A549 (cell line): ENCODE measurements at regions of chr16 and their contacts with region 1.

Region 1: GRCh38 chr16:66534376-66534799 is 15.5 kb downstream of the TK2 start:
- DNase-seq: no peak
- ATAC-seq: no peak
- H3K4me3 ChIP-seq: no peak overlapping the region
- H3K27ac ChIP-seq: no peak overlapping the region
- H3K4me1 ChIP-seq: no peaks in the 10 kb centered on the region
- CTCF ChIP-seq: no peak
- EP300 ChIP-seq: no peak
- POLR2A ChIP-seq: no peak
- RAD21 ChIP-seq: no peak

Region 2: DNA sequence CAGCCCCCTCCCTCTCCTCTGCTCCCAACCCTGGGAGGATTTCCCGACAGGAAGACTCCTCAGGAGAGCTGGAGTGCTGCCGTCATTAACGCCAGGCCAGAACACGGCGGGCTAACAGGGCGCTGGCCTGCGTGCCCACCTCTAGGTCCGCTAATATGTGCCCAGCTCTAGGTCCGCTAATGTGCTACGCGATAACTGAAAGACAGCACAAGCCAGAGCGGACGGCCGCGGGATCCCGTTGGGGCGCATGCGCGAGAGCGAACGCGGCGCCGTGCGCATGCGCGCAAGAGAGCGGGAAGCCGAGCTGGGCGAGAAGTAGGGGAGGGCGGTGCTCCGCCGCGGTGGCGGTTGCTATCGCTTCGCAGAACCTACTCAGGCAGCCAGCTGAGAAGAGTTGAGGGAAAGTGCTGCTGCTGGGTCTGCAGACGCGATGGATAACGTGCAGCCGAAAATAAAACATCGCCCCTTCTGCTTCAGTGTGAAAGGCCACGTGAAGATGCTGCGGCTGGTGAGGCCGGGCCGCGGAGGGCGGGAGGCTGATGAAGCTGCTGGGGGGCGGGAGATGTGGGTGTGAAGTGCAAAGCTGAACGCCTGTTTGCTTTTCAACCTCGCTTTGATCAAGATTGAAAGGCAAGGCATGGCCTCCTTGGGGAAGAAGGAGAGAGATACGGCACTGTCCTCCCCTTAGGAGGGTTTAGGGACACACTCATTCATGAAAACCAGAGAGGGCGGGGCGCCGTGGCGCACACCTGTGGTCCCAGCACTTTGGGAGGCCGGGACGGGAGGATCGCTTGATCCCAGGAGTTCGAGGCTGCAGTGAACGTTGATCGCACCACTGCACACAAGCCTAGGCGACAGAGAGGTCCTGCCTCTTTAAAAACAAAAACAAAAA is 18.1 kb after region 1 on chr16 and contains the start of gene CKLF:
- CTCF ChIA-PET with region 1: interaction called, 10 read pairs
- POLR2A ChIA-PET with region 1: no interaction called
- DNase-seq: peak; percentile 90 to 92
- ATAC-seq: peak; percentile 72 to 81
- H3K4me3 ChIP-seq: peak within 1 kb of the TSS; percentile 51
- H3K27ac ChIP-seq: peak within 1 kb of the TSS; percentile 90 to 91
- H3K4me1 ChIP-seq: peaks cover 40% of the 10 kb centered on the region
- CTCF ChIP-seq: no peak
- EP300 ChIP-seq: no peak
- POLR2A ChIP-seq: peak; percentile 80
- RAD21 ChIP-seq: no peak
- polyA plus RNA-seq, gene CKLF: 85.1 and 96.5 TPM in 2 replicates